Activated CD4-positive, alpha-beta memory T cell treated with anti-CD3 and anti-CD28 coated beads, Interleukin-2, amount 10 ng/mL, durations not matched to agents 7 days and 5 days (primary cell): ENCODE measurements at regions of chr2 and their contacts with region 1.

Region 1: DNA sequence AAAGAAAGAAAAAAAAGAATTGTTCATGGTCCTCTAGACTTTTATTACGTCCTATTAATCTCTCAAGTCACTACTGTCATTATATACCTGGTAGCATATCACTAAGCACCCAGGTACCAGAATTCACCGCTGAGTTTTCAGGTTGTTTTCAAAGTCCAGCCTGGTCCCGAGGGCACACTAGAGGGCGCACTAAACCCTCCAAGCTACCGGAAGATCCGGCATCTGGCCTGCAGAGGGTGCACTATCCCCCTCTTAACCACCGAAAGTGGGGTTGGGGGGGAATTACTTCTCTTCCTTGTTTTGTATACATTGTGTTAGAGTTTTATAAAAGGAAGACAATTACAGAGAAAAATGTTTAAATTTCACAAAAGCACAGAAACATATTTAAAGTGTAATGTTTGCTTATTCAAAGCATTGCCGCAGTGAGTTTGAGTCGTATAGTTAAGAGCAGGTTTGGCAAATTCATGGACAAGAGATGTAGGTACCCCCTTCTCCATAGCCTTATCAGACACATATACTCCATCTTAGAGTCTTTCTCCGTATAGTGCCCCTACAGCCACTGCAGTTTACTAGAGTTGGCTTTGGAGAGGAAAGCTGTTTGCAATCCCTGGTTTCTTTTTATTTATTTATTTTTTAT is 19.2 kb downstream of the MOGAT1 start:
- DNase-seq: peak; percentile 77
- H3K4me3 Mint-ChIP-seq: no peak overlapping the region
- H3K27ac Mint-ChIP-seq: no peak overlapping the region
- H3K4me1 Mint-ChIP-seq: peaks cover 13% of the 10 kb centered on the region
- H3K27me3 Mint-ChIP-seq: peaks cover 23% of the 10 kb centered on the region

Region 2: DNA sequence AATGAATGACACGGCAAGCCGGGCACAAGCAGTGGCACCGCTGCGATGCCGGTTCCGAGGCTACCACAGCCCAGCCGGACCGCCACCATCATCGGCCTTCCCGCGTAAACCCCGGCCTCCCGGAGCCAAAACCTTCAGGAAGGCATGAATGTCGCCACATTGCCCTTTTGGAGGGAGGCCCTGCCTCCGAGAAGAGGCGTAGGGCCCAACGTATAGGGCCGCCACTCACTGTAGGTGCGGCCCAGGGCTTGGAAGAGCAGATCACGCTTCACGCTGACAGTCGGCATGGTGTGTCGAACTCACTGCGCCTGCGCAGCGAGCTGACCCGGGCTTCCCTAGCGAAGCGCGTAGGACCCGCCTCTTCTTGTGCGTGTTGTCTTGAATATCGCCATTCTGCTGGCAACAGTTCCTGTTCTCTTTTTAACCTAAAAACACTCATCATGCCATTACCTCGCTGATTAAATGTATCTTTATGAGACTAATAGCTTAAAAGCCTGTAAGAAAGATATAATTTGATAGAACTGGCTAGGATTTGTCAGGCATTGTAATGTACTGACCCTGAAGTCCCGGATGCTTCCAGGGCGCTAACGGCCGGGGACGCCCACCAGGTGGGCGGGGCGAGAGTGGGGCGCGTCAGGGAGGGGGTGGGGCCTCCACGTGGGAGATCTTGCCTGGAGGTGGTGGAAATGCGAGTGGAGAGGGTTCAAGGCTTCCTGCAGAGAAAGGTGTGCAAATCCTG is 34.7 kb before region 1 on chr2 and contains the start of gene FARSB:
- CTCF ChIA-PET with region 1: interaction called, 12 read pairs
- POLR2A ChIA-PET with region 1: interaction called, 3 read pairs
- DNase-seq: peak; percentile 93
- H3K4me3 Mint-ChIP-seq: peak within 1 kb of the TSS; percentile 95
- H3K27ac Mint-ChIP-seq: peak within 1 kb of the TSS; percentile 85
- H3K4me1 Mint-ChIP-seq: peaks cover 46% of the 10 kb centered on the region
- H3K27me3 Mint-ChIP-seq: no peaks in the 10 kb centered on the region
- total RNA-seq, gene FARSB: 20.8 to 21.5 TPM

Region 3: DNA sequence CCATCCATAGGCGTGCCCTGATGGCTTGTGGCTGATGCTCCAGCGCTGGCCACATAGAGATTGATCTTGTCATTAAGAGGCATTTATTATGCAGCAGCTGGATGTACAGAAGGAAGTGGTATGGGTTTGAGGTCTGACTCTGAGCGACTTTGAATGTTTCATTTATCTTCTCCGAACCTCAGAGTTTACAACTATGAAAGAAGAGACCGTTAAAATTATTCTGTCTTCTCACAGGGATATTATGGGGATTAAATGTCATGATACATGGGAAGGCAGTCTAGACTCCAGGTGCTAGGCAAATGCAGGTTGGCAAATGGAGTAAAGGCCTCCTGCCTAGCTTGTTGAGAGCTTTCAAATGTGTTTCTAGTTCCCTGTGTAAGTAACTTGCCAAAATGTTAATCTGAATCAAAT is 11.0 kb after region 1 on chr2:
- CTCF ChIA-PET with region 1: interaction called, 23 read pairs
- POLR2A ChIA-PET with region 1: interaction called, 4 read pairs
- DNase-seq: peak; percentile 44
- H3K4me3 Mint-ChIP-seq: peak overlapping the region; percentile 24
- H3K27ac Mint-ChIP-seq: no peak overlapping the region
- H3K4me1 Mint-ChIP-seq: peaks cover 18% of the 10 kb centered on the region
- H3K27me3 Mint-ChIP-seq: peaks cover 46% of the 10 kb centered on the region

Region 4: GRCh38 chr2:222707689-222708525 is 17.2 kb after region 1 on chr2:
- CTCF ChIA-PET with region 1: interaction called, 19 read pairs
- POLR2A ChIA-PET with region 1: interaction called, 4 read pairs
- DNase-seq: peak; percentile 76
- H3K4me3 Mint-ChIP-seq: no peak overlapping the region
- H3K27ac Mint-ChIP-seq: no peak overlapping the region
- H3K4me1 Mint-ChIP-seq: peaks cover 9% of the 10 kb centered on the region
- H3K27me3 Mint-ChIP-seq: peaks cover 44% of the 10 kb centered on the region

Region 5: DNA sequence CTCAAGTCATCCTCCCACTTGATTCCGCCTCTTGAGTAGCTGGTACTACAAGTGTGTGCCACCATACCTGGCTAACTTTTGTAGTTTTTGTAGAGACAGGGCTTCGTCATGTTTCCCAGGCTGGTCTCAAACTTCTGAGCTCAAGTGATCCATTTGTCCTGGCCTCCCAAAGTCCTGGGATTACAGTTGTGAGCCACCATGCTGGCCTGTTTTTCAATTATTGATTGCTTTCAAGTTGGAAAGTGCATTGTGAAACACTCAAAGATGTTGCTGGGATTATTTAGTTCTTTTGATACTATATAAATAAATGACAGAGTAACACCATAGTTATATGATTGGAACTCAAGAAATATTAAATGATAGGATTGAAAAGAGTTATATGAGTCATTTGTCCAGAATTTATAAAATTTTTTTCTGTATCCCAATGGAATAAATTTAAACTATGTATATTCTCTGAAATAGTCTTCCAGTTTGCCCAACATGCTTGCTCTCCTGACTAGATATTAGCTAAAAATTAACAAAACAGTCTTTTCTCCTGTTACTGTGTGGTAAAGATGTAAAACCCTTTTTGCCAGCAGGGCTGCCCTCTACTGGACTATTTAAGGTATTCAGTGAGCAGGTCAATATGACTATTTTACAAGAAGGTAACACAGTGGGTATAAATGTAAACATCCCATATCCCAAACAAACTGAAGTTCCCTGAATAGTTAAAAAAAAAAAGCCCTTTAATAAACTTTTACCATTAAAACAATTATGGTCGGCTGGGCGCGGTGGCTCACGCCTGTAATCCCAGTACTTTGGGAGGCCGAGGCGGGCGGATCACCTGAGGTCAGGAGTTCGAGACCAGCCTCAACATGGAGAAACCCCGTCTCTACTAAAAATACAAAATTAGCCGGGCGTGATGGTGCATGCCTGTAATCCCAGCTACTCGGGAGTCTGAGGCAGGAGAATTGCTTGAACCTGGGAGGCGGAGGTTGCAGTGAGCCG is 212.8 kb after region 1 on chr2:
- CTCF ChIA-PET with region 1: interaction called, 25 read pairs
- POLR2A ChIA-PET with region 1: no interaction called
- DNase-seq: peak; percentile 28
- H3K4me3 Mint-ChIP-seq: no peak overlapping the region
- H3K27ac Mint-ChIP-seq: no peak overlapping the region
- H3K4me1 Mint-ChIP-seq: peaks cover 6% of the 10 kb centered on the region
- H3K27me3 Mint-ChIP-seq: no peaks in the 10 kb centered on the region